ENCODE measurements at regions of chr14 and their contacts with region 1.

Region 1: DNA sequence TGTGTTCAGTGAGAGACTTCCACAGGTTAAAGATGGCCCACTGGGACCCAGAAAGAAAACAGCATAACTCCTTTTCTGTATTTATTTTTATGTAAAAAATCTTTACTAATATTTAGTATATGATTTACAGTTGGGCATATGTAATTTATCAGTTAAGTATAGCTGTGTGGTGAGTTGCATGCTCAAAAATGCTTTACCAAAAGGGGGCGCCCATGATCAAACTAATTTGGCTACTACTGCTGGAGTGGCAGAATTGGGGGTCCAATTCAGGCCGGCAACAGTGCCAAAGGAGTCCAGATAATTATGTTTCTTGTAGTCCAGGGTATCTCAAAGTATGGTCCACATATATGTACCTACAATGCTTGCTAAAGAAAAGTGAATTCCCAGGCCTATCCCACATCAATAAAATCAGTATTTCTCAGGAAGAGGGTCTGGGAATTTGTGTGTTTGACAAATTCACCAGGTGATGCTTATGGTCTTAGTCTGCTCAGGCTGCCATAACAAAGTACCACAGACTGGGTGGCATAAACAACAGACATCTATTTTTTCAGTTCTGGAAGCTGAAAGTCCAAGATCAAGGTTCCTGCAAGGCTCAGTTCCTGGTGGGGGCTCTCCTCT is 152.0 kb downstream of the KTN1 start:
- DNase-seq: peak in 32 of 35 experiments; percentile 8 to 67 (median 36)
- ATAC-seq: peak in 1 of 4 experiments; percentile 49
- H3K4me3 ChIP-seq: no peak overlapping the region
- H3K4me3 Mint-ChIP-seq: no peak overlapping the region
- H3K27ac ChIP-seq: no peak overlapping the region
- H3K27ac Mint-ChIP-seq: no peak overlapping the region
- H3K4me1 ChIP-seq: no peaks in the 10 kb centered on the region
- H3K4me1 Mint-ChIP-seq: peaks cover 0 to 11% (median 0%) of the 10 kb centered on the region in 3 donors
- H3K27me3 ChIP-seq: no peaks in the 10 kb centered on the region
- H3K27me3 Mint-ChIP-seq: no peaks in the 10 kb centered on the region

Region 2: DNA sequence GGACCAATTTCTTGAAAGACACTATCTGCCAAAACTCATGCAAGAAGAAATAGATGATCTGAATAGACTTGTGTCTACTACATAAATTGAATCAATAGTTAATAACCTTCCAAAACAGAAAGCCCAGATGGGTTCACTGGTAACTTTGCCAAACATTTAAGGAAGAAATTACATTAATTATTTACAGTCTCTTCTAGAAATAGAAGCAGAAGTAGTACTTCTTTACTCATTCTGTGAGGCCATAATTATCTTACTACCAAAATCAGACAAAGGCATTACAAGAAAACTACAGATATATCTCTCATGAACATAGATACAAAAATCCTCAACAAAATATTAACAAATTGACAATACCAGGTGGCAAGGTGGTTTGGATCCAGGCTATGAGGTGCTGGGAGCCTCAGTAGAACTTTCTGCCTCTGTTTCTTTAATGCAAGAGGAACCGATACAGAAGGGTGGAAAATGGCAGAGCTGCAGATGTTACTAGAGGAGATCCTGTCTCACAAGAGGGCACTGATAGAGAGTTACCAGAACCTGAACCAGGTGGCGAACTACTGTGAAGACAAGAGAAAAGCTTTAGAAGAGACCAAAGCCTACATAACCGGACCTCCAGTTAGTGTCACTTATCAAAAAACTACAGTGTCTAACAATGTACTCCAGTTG is 185.6 kb before region 1 on chr14:
- CTCF ChIA-PET with region 1: interaction called in 1 of 2 experiments, 11 read pairs
- POLR2A ChIA-PET with region 1: no interaction called
- DNase-seq: no peak
- ATAC-seq: no peak
- H3K4me3 ChIP-seq: no peak overlapping the region
- H3K4me3 Mint-ChIP-seq: no peak overlapping the region
- H3K27ac ChIP-seq: no peak overlapping the region
- H3K27ac Mint-ChIP-seq: no peak overlapping the region
- H3K4me1 ChIP-seq: no peaks in the 10 kb centered on the region
- H3K4me1 Mint-ChIP-seq: no peaks in the 10 kb centered on the region
- H3K27me3 ChIP-seq: no peaks in the 10 kb centered on the region
- H3K27me3 Mint-ChIP-seq: no peaks in the 10 kb centered on the region

Region 3: DNA sequence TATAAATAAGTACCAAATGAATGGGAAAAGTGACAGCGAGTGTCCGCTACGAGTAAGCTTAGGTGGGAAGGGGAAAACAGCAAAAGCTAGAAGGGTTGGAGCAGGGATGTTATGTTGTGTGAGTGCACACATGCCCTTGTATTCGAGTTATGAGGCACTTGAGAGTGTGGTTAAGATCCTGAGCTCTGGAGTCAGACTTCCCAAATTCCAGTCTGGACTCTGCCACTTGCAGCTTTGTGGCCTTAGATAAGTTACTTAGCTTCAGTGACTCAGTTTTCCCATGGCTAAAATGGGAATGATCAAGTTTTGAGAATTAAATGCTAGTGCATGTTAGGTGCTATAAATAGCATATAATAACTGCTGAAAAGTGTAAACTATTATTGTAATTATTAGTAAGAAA is 107.1 kb before region 1 on chr14:
- CTCF ChIA-PET with region 1: no interaction called
- POLR2A ChIA-PET with region 1: no interaction called
- DNase-seq: no peak
- ATAC-seq: no peak
- H3K4me3 ChIP-seq: no peak overlapping the region
- H3K4me3 Mint-ChIP-seq: no peak overlapping the region
- H3K27ac ChIP-seq: no peak overlapping the region
- H3K27ac Mint-ChIP-seq: peak overlapping the region in 1 of 2 donors; percentile 12
- H3K4me1 ChIP-seq: no peaks in the 10 kb centered on the region
- H3K4me1 Mint-ChIP-seq: peaks cover 5 to 15% (median 11%) of the 10 kb centered on the region in 3 donors
- H3K27me3 ChIP-seq: no peaks in the 10 kb centered on the region
- H3K27me3 Mint-ChIP-seq: no peaks in the 10 kb centered on the region

Region 4: GRCh38 chr14:56339855-56340701 is 608.1 kb after region 1 on chr14:
- CTCF ChIA-PET with region 1: interaction called, 12 to 13 read pairs
- POLR2A ChIA-PET with region 1: interaction called in 1 of 2 experiments, 10 read pairs
- DNase-seq: peak in 34 of 35 experiments; percentile 3 to 64 (median 42)
- ATAC-seq: peak in 3 of 4 experiments; percentile 58 to 72 (median 64)
- H3K4me3 ChIP-seq: no peak overlapping the region
- H3K4me3 Mint-ChIP-seq: no peak overlapping the region
- H3K27ac ChIP-seq: no peak overlapping the region
- H3K27ac Mint-ChIP-seq: no peak overlapping the region
- H3K4me1 ChIP-seq: peaks cover 0 to 4% of the 10 kb centered on the region in 2 experiments
- H3K4me1 Mint-ChIP-seq: peaks cover 4 to 5% (median 4%) of the 10 kb centered on the region in 3 donors
- H3K27me3 ChIP-seq: no peaks in the 10 kb centered on the region
- H3K27me3 Mint-ChIP-seq: no peaks in the 10 kb centered on the region

Region 5: GRCh38 chr14:56422703-56423213 is 690.8 kb after region 1 on chr14:
- CTCF ChIA-PET with region 1: interaction called, 3 to 12 read pairs
- POLR2A ChIA-PET with region 1: no interaction called
- DNase-seq: peak in 9 of 35 experiments; percentile 1 to 42 (median 5)
- ATAC-seq: peak in 2 of 4 experiments; percentile 29 to 43
- H3K4me3 ChIP-seq: no peak overlapping the region
- H3K4me3 Mint-ChIP-seq: no peak overlapping the region
- H3K27ac ChIP-seq: no peak overlapping the region
- H3K27ac Mint-ChIP-seq: no peak overlapping the region
- H3K4me1 ChIP-seq: no peaks in the 10 kb centered on the region
- H3K4me1 Mint-ChIP-seq: no peaks in the 10 kb centered on the region
- H3K27me3 ChIP-seq: peaks cover 0 to 8% of the 10 kb centered on the region in 2 experiments
- H3K27me3 Mint-ChIP-seq: peaks cover 0 to 8% of the 10 kb centered on the region in 2 donors